B cell (primary cell): ENCODE measurements at regions of chr7 and their contacts with region 1.

Region 1: DNA sequence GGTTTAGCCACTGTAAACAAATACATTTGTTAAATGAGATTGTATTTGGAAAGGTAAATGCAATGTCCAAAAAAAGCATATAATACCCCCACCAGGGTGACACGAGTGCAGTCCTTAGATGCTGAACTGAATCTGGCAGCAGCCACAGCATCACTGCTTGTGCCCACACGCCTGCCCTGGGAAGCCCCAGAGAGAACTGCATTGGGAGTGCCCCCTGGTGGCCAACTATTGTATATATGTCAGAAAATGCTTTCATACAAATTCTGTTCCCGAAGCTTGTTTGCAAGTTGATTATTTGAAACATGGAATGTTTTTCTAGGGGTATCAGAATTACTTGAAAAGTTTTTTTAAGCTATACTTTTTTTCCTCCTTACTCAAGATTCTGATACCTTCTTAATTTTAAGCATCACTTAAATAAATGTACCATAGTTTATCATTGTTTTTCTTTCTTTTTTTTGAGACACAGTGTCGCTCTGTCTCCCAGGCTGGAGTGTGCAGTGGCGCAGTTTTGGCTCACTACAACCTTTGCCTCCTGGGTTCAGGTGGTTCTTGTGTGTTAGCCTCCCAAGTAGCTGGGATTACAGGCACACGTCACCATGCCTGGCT is 50.1 kb downstream of the LANCL2 start:
- DNase-seq: peak; percentile 81
- ATAC-seq: peak; percentile 96
- H3K4me3 ChIP-seq: no peak overlapping the region
- H3K4me3 Mint-ChIP-seq: no peak overlapping the region
- H3K27ac ChIP-seq: no peak overlapping the region
- H3K27ac Mint-ChIP-seq: no peak overlapping the region
- H3K4me1 ChIP-seq: no peaks in the 10 kb centered on the region
- H3K4me1 Mint-ChIP-seq: peaks cover 2% of the 10 kb centered on the region
- H3K27me3 ChIP-seq: no peaks in the 10 kb centered on the region
- H3K27me3 Mint-ChIP-seq: no peaks in the 10 kb centered on the region
- CTCF ChIP-seq: peak; percentile 88

Region 2: DNA sequence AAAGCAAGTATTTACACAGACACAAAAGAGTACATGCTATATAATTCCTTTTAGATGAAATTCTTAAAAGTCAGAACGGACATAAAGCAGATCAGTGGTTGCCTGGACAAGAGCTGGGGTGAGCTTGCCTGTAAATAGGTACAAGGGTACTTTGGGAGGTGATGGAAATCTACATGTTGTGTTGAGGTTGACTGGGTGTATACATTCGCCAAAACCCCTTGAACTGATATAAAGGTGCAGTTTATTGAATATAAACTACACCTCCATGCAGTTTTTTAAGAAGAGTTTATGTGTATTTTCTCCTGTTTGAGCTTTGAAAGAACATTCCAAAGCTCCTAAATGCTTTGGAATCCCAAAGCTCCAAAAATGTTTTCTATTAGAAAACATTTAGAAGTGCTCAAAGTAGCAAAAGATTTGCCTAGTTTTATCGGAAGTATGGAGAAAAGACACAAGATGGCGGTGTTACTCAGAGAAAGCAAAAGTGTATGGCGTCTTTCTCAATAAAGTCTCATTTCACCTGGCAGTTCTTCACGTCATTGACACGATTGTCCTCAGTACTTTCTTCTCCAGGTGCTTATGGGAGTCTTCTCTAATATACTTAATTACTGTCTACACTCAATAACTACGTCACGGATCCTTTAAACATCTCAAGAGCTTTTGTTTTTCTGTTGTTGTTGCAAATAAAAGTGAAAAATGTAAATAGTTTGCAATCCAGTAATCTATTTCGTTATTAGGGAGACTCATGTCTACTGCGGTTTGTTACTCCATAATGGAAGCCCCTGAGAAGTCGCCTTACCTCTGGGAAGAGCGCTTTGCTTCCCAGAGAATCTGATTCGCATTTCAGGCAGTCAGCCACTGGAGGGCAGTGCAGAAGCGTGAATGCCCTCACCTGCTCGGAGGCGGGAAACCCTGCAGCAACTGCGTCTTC is 641.5 kb before region 1 on chr7:
- CTCF ChIA-PET with region 1: interaction called, 15 read pairs
- POLR2A ChIA-PET with region 1: no interaction called
- intact Hi-C with region 1: no loop called
- DNase-seq: peak; percentile 61
- ATAC-seq: peak; percentile 78
- H3K4me3 ChIP-seq: peak overlapping the region in 4 of 5 experiments; percentile 29 to 46 (median 40)
- H3K4me3 Mint-ChIP-seq: peak overlapping the region; percentile 83
- H3K27ac ChIP-seq: no peak overlapping the region
- H3K27ac Mint-ChIP-seq: peak overlapping the region; percentile 35
- H3K4me1 ChIP-seq: no peaks in the 10 kb centered on the region
- H3K4me1 Mint-ChIP-seq: peaks cover 9% of the 10 kb centered on the region
- H3K27me3 ChIP-seq: peaks cover 0 to 19% (median 9%) of the 10 kb centered on the region in 4 experiments
- H3K27me3 Mint-ChIP-seq: peaks cover 28% of the 10 kb centered on the region
- CTCF ChIP-seq: peak; percentile 85

Region 3: DNA sequence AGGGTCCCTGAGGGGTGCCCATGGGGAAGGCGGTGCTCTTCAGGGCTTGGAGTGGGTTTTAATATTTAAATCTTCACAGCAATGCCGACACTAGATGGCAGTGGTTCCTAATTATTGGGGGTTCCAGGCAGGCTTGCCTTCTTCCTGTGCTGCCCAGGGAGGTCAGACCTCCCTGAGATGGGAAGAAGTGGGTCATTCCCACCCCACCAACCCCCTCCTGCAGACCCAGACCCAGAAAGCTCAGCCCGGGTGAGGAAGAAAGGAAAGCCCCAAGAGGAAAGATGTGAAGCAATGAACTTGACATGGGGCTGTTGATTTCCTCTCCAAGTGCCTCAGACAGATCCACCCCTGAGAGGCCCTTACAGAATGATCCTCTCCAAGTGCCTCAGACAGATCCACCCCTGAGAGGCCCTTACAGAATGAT is 135.2 kb before region 1 on chr7:
- CTCF ChIA-PET with region 1: interaction called, 111 read pairs
- POLR2A ChIA-PET with region 1: no interaction called
- intact Hi-C with region 1: no loop called
- DNase-seq: peak; percentile 69
- ATAC-seq: peak; percentile 73
- H3K4me3 ChIP-seq: no peak overlapping the region
- H3K4me3 Mint-ChIP-seq: no peak overlapping the region
- H3K27ac ChIP-seq: no peak overlapping the region
- H3K27ac Mint-ChIP-seq: no peak overlapping the region
- H3K4me1 ChIP-seq: no peaks in the 10 kb centered on the region
- H3K4me1 Mint-ChIP-seq: no peaks in the 10 kb centered on the region
- H3K27me3 ChIP-seq: peaks cover 0 to 3% (median 0%) of the 10 kb centered on the region in 4 experiments
- H3K27me3 Mint-ChIP-seq: peaks cover 4% of the 10 kb centered on the region
- CTCF ChIP-seq: peak; percentile 68

Region 4: DNA sequence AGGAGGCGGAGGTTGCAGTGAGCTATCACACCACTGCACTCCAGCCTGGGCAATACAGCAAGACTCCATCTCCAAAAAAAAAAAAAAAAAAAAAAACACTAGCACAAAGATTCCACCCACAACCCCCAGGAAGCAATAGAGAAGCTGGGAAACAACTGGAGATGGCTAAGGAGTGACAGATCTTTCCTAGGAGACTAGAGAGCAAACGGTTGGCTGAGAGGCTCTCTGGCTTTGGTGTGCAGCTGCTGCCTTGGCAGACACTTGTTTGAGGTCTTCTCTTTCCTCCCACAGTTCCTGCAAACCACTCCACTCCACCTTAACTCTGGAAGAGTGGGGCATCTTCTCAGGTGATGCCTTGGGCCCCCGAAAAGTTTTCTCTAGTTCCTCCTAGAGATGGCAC is 128.6 kb before region 1 on chr7:
- CTCF ChIA-PET with region 1: interaction called, 111 read pairs
- POLR2A ChIA-PET with region 1: no interaction called
- intact Hi-C with region 1: no loop called
- DNase-seq: no peak
- ATAC-seq: no peak
- H3K4me3 ChIP-seq: no peak overlapping the region
- H3K4me3 Mint-ChIP-seq: no peak overlapping the region
- H3K27ac ChIP-seq: no peak overlapping the region
- H3K27ac Mint-ChIP-seq: no peak overlapping the region
- H3K4me1 ChIP-seq: no peaks in the 10 kb centered on the region
- H3K4me1 Mint-ChIP-seq: no peaks in the 10 kb centered on the region
- H3K27me3 ChIP-seq: peaks cover 0 to 2% (median 0%) of the 10 kb centered on the region in 4 experiments
- H3K27me3 Mint-ChIP-seq: peaks cover 13% of the 10 kb centered on the region
- CTCF ChIP-seq: no peak